HCT116 (cell line): ENCODE measurements at regions of chr4 and their contacts with region 1.

Region 1: GRCh38 chr4:22389240-22389870 is 126.5 kb downstream of the ADGRA3 start:
- DNase-seq: peak; percentile 48
- ATAC-seq: peak; percentile 66
- H3K4me3 ChIP-seq: no peak overlapping the region
- H3K27ac ChIP-seq: no peak overlapping the region
- H3K4me1 ChIP-seq: peaks cover 0 to 19% of the 10 kb centered on the region in 2 experiments; a peak in 2 of 4 replicates
- H3K27me3 ChIP-seq: no peaks in the 10 kb centered on the region
- CTCF ChIP-seq: peak; percentile 55 to 82 (median 71); a peak in 5 of 6 replicates
- POLR2A ChIP-seq: no peak
- RAD21 ChIP-seq: peak; percentile 71

Region 2: DNA sequence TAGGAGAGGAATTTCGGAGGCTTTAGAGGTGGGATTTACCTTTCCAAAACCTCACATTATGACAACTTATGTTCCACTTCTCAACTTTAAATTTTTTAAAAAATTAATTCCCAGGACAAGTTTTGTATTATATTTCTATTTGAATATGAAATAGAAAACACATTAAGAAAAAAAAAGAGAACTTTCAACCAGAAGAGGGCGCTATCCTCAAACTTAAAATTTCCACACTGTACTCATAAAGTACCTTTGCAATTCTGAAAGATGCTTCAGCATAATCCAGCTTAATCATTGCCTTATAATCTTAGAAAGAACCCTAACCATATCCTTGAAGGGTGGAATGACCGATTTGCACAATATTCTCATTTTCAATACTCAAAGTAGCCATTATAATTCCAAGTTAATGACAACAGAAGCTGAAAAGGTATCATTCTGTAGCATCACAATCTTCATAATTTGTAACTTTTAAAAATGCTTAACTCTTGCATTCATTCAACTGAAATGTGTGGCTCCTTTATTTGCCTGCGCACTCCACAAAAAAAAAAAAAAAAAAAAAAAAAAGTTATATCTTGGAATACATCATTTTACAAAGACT is 598.8 kb before region 1 on chr4:
- CTCF ChIA-PET with region 1: interaction called, 54 read pairs
- POLR2A ChIA-PET with region 1: no interaction called
- RAD21 ChIA-PET with region 1: no interaction called
- intact Hi-C with region 1: loop called (anchors 1 kb)
- DNase-seq: peak; percentile 16
- ATAC-seq: no peak
- H3K4me3 ChIP-seq: no peak overlapping the region
- H3K27ac ChIP-seq: no peak overlapping the region
- H3K4me1 ChIP-seq: no peaks in the 10 kb centered on the region
- H3K27me3 ChIP-seq: no peaks in the 10 kb centered on the region
- CTCF ChIP-seq: peak; percentile 22 to 64 (median 40); a peak in 4 of 6 replicates
- POLR2A ChIP-seq: no peak
- RAD21 ChIP-seq: peak; percentile 57

Region 3: DNA sequence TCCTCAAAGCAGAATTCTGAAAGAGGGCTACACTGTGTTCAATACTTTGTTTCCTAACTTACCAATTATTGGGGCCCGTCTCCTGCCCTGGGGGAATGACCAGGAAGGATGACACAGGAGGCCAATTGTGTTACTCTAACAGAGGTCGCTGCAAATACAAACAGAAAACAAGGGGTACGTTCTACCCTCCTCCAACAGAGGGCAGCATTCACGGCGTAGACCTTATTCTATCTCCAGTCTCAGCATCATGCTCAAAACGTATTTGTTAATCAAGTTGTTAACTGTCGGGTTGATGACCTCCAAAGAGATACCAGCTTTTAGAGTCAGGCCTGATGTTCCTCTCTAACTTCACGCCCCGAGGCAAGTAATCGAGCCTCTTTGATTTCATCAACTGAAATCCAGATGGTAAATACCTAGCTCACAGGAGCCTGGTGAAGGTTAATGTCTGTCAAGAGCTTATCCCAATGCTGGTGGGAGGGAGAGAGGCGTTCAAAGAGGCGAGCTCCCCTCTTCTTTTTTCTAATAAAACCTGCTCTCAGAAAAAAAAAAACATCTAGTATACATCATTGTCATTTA is 259.8 kb before region 1 on chr4:
- CTCF ChIA-PET with region 1: interaction called, 9 read pairs
- POLR2A ChIA-PET with region 1: no interaction called
- RAD21 ChIA-PET with region 1: no interaction called
- intact Hi-C with region 1: loop called (anchors 1 kb)
- DNase-seq: peak; percentile 7
- ATAC-seq: peak; percentile 80
- H3K4me3 ChIP-seq: no peak overlapping the region
- H3K27ac ChIP-seq: no peak overlapping the region
- H3K4me1 ChIP-seq: no peaks in the 10 kb centered on the region
- H3K27me3 ChIP-seq: no peaks in the 10 kb centered on the region
- CTCF ChIP-seq: peak; percentile 21 to 66 (median 64); a peak in 4 of 6 replicates
- POLR2A ChIP-seq: no peak
- RAD21 ChIP-seq: peak; percentile 36

Region 4: DNA sequence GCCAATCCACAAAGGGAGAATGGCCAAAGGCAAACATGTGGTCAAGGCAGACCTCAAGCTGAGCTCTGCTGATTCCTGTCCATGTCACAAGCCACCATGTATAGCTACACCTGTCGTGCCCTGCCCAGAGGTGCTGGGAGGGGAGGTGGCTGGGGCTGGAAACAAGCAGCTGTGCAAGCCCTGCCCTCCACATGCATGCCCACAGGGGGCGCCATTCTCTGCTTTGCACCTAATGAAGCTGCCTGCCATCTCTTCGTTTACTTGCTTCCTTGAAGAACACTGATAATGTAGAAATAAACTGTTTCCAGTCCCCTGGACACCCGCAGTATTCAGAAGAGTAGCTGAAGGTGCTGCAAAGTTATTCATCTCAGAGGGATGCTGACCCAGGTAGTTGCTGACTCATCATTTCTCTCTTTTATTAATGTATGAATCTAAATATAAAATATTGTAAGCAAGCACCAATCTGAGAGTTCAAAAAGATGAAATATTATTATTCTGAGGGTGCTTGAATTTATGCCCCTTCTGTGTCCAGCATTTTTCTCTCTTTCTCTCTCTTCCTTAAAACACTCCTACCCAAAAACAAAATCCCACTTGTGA is 152.1 kb before region 1 on chr4:
- CTCF ChIA-PET with region 1: interaction called, 17 read pairs
- POLR2A ChIA-PET with region 1: no interaction called
- RAD21 ChIA-PET with region 1: no interaction called
- intact Hi-C with region 1: loop called (anchors 2 kb)
- DNase-seq: peak; percentile 29
- ATAC-seq: peak; percentile 96
- H3K4me3 ChIP-seq: no peak overlapping the region
- H3K27ac ChIP-seq: no peak overlapping the region
- H3K4me1 ChIP-seq: no peaks in the 10 kb centered on the region
- H3K27me3 ChIP-seq: no peaks in the 10 kb centered on the region
- CTCF ChIP-seq: peak; percentile 43 to 94 (median 91); a peak in 5 of 6 replicates
- POLR2A ChIP-seq: no peak
- RAD21 ChIP-seq: peak; percentile 58

Region 5: DNA sequence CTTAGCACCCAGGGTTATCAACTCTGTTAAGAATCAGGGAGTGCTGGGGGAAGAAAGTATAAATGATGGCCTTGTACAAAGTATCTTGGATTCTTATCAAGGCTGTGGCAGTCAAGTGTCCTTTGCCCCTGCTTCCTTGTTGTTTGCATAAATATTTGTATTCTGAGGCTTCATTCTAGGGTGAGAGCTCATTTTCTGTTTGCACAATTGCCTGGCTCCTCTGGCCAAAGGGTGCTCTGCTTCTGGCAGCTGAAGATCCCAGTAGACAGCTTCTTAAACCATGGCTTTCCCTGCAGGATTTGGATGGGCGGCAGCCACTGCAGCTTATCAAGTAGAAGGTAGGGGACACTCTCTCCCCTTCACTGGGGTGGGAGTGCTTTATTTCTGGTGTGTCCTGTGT is 303.4 kb after region 1 on chr4 and contains the start of gene GBA3:
- CTCF ChIA-PET with region 1: no interaction called
- POLR2A ChIA-PET with region 1: no interaction called
- RAD21 ChIA-PET with region 1: no interaction called
- intact Hi-C with region 1: no loop called
- DNase-seq: no peak
- ATAC-seq: no peak
- H3K4me3 ChIP-seq: no peak within 1 kb of the TSS
- H3K27ac ChIP-seq: no peak within 1 kb of the TSS
- H3K4me1 ChIP-seq: no peaks in the 10 kb centered on the region
- H3K27me3 ChIP-seq: peaks cover 16% of the 10 kb centered on the region
- CTCF ChIP-seq: no peak
- POLR2A ChIP-seq: no peak
- RAD21 ChIP-seq: no peak
- total RNA-seq, gene GBA3: not detected

Region 6: DNA sequence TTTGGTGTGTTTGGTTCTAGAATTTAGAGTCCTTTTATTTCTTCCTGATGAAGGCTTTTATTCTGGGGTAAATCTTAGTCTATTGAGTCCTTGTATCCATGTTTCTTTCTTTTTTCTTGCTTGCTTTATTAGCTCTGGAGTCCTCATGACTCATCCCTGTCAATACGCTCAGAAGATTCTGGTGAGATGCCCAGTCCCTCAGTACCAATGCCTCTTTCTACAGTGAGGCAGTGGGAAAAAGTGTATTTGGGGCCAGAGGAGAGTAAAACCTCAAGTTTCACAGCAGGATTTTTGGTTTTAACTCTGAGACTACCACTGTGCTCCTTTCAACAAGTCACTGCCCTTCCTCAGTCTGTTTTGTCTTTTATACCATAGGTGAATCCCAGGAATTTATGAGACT is 671.4 kb after region 1 on chr4:
- CTCF ChIA-PET with region 1: no interaction called
- POLR2A ChIA-PET with region 1: no interaction called
- RAD21 ChIA-PET with region 1: no interaction called
- intact Hi-C with region 1: no loop called
- DNase-seq: no peak
- ATAC-seq: no peak
- H3K4me3 ChIP-seq: no peak overlapping the region
- H3K27ac ChIP-seq: no peak overlapping the region
- H3K4me1 ChIP-seq: no peaks in the 10 kb centered on the region
- H3K27me3 ChIP-seq: no peaks in the 10 kb centered on the region
- CTCF ChIP-seq: no peak
- POLR2A ChIP-seq: no peak
- RAD21 ChIP-seq: no peak